Spleen (tissue), 13 donors: ENCODE measurements at regions of chr5 and their contacts with region 1.

Region 1: DNA sequence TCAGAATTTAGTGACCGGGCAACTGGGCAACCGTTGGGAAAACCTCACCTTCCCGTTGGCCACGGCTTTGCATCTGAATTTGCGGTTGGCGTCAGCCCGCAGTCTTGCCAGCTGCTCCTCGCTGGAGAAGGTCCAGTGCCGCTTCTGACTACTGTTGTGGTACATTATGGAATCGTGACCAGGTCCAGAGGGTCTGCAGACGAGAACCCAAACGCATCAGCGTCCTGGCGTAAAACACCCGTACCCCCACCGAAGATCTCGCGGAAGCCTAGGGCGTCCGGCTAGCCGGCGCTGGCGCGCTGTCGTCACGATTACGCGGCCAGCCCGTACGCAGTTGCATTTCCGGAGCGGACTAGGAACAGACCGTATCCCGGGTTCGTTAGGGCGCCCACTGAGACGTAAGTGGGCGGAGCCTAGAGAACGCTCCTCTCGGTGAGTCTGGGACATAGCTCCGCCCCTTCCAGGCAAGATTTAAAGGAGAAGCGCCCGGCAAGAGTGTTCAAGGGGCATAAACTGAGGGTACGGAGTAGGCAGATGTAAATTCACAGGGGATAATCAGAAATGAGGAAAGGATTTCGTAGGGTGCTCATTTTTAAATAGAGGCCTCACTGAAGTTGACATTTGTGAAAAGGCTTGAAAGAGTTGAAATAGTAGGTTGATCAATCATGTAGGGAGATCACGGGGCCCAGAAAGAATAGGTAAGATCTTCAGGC is at the start of gene CCNH:
- DNase-seq: peak; percentile 100
- H3K4me3 ChIP-seq: peak within 1 kb of the TSS; percentile 35 to 82 (median 66)
- H3K27ac ChIP-seq: peak within 1 kb of the TSS; percentile 73 to 99 (median 98)
- H3K4me1 ChIP-seq: peaks cover 24 to 49% (median 40%) of the 10 kb centered on the region in 6 donors
- H3K27me3 ChIP-seq: no peaks in the 10 kb centered on the region
- CTCF ChIP-seq: peak in 5 of 11 experiments; percentile 11 to 34 (median 19)
- POLR2A ChIP-seq: peak; percentile 72 to 93 (median 89)
- total RNA-seq, gene CCNH: 61.4 to 188 (median 81.1) TPM

Region 2: GRCh38 chr5:86617756-86618576 is 794.8 kb before region 1 on chr5 and contains the start of gene COX7C:
- intact Hi-C with region 1: loop called (anchors 10 kb)
- DNase-seq: peak; percentile 92
- H3K4me3 ChIP-seq: peak within 1 kb of the TSS; percentile 73 to 99 (median 90)
- H3K27ac ChIP-seq: peak within 1 kb of the TSS; percentile 87 to 96 (median 92)
- H3K4me1 ChIP-seq: peaks cover 0 to 28% (median 18%) of the 10 kb centered on the region in 6 donors
- H3K27me3 ChIP-seq: peaks cover 0 to 7% (median 0%) of the 10 kb centered on the region in 7 donors
- CTCF ChIP-seq: no peak
- POLR2A ChIP-seq: peak in 1 of 3 donors; percentile 75
- total RNA-seq, gene COX7C: 308 to 480 (median 350) TPM

Region 3: GRCh38 chr5:86737579-86737978 is 675.2 kb before region 1 on chr5:
- intact Hi-C with region 1: no loop called
- DNase-seq: no peak
- H3K4me3 ChIP-seq: no peak overlapping the region
- H3K27ac ChIP-seq: no peak overlapping the region
- H3K4me1 ChIP-seq: no peaks in the 10 kb centered on the region
- H3K27me3 ChIP-seq: no peaks in the 10 kb centered on the region
- CTCF ChIP-seq: no peak
- POLR2A ChIP-seq: no peak

Region 4: DNA sequence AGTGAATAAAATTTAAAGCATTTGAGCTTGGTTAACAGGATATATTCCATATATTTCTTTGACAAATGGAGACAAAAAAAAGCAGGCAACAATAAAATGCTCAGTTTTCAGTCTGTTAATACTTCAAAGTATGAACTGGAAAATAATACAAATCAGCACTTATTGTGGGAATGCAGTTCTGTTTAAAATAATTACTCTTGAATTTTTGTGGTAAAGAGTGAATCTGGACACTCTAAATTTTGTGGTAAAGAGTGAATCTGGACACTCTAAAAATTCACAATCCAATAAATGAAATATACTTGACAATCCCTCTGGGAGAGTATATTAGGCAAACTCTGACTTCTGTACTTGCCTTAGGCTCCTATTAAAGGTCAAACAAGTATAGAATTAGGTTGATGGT is 287.0 kb before region 1 on chr5:
- intact Hi-C with region 1: no loop called
- DNase-seq: no peak
- H3K4me3 ChIP-seq: no peak overlapping the region
- H3K27ac ChIP-seq: no peak overlapping the region
- H3K4me1 ChIP-seq: peaks cover 8 to 32% (median 17%) of the 10 kb centered on the region in 6 donors
- H3K27me3 ChIP-seq: no peaks in the 10 kb centered on the region
- CTCF ChIP-seq: no peak
- POLR2A ChIP-seq: no peak

Region 5: GRCh38 chr5:87137283-87137682 is 275.5 kb before region 1 on chr5:
- intact Hi-C with region 1: no loop called
- DNase-seq: peak; percentile 38
- H3K4me3 ChIP-seq: no peak overlapping the region
- H3K27ac ChIP-seq: no peak overlapping the region
- H3K4me1 ChIP-seq: peaks cover 0 to 24% (median 3%) of the 10 kb centered on the region in 6 donors
- H3K27me3 ChIP-seq: no peaks in the 10 kb centered on the region
- CTCF ChIP-seq: no peak
- POLR2A ChIP-seq: no peak

Region 6: DNA sequence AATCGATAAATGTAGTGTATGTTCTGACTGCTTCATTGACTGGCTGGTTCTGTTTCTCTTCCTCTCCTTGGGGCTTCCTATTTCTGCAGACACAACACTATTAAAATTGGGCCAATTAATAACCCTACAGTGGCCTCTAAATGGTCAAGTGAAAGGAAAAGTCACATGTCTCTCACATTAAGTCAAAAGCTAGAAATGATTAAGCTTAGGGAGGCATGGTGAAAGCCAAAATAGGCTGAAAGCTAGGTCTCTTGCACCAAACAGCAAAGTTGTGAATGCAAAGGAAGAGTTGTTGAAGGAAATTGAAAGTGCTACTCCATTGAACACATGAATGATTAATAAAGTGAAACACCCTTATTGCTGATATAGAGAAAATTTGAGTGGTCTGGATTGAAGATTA is 58.3 kb before region 1 on chr5:
- intact Hi-C with region 1: no loop called
- DNase-seq: no peak
- H3K4me3 ChIP-seq: no peak overlapping the region
- H3K27ac ChIP-seq: peak overlapping the region in 1 of 8 donors; percentile 0
- H3K4me1 ChIP-seq: peaks cover 0 to 22% (median 1%) of the 10 kb centered on the region in 6 donors
- H3K27me3 ChIP-seq: no peaks in the 10 kb centered on the region
- CTCF ChIP-seq: no peak
- POLR2A ChIP-seq: no peak